Activated T-helper 2 cell treated with anti-CD3 and anti-CD28 coated beads, Interferon-gamma antibody, Interleukin-2, Interleukin-4, amounts not matched to agents 10 μg/mL and 5 μg/mL and 100 μg/mL, durations not matched to agents 14 hours and 24 hours and 36 hours (primary cell): ENCODE measurements at regions of chr22 and their contacts with region 1.

Region 1: DNA sequence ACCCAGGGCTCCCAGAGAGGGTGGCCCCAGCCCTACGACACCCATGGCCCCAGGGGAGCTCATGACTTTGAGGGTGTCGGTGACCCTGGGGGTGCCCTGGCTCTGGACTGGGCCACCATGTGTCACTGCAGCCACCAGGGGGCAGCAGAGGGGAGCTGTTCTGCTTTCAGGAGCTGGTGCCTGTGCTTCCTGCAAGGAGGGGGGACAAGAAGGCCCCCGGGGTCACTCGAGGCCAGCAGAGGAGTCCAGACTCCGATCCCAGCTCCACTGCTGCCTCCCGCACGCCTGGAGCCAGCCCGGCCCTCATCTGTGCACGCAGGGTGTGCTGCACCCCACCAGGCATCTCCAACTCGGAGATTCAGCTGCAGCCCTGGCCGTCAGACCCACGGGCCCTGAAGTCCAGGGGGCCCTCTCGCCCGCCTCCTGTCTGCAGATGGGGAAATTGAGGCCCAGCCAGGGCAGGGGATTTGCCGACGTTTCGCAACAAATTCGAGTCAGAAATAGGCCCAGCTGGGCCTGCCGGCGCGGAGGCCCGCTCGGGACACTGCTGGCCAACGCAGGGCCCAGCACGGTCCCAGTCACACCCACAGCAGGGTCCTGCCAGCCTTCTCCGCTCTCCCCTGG is 29.5 kb upstream of the WNT7B start:
- DNase-seq: peak; percentile 73
- H3K4me3 Mint-ChIP-seq: no peak overlapping the region
- H3K27ac Mint-ChIP-seq: no peak overlapping the region
- H3K4me1 Mint-ChIP-seq: peaks cover 7% of the 10 kb centered on the region
- H3K27me3 Mint-ChIP-seq: no peaks in the 10 kb centered on the region

Region 2: GRCh38 chr22:46116491-46116958 is 110.0 kb after region 1 on chr22:
- intact Hi-C with region 1: loop called (anchors 1 kb)
- DNase-seq: peak; percentile 74
- H3K4me3 Mint-ChIP-seq: no peak overlapping the region
- H3K27ac Mint-ChIP-seq: no peak overlapping the region
- H3K4me1 Mint-ChIP-seq: no peaks in the 10 kb centered on the region
- H3K27me3 Mint-ChIP-seq: no peaks in the 10 kb centered on the region

Region 3: GRCh38 chr22:46309526-46310085 is 303.1 kb after region 1 on chr22:
- intact Hi-C with region 1: loop called (anchors 5 kb)
- DNase-seq: no peak
- H3K4me3 Mint-ChIP-seq: no peak overlapping the region
- H3K27ac Mint-ChIP-seq: no peak overlapping the region
- H3K4me1 Mint-ChIP-seq: peaks cover 11% of the 10 kb centered on the region
- H3K27me3 Mint-ChIP-seq: no peaks in the 10 kb centered on the region